Activated CD4-positive, alpha-beta T cell treated with anti-CD3 and anti-CD28 coated beads for 36 hours (primary cell): ENCODE measurements at regions of chr4 and their contacts with region 1.

Region 1: GRCh38 chr4:141158219-141158618 is 24.9 kb upstream of the RNF150 start:
- DNase-seq: no peak
- ATAC-seq: no peak
- H3K4me3 Mint-ChIP-seq: no peak overlapping the region
- H3K27ac Mint-ChIP-seq: no peak overlapping the region
- H3K4me1 Mint-ChIP-seq: no peaks in the 10 kb centered on the region
- H3K27me3 Mint-ChIP-seq: peaks cover 3% of the 10 kb centered on the region

Region 2: GRCh38 chr4:141853091-141853764 is 695.0 kb after region 1 on chr4:
- CTCF ChIA-PET with region 1: no interaction called
- POLR2A ChIA-PET with region 1: no interaction called
- intact Hi-C with region 1: loop called in 1 of 2 experiments (anchors 10 kb)
- DNase-seq: no peak
- ATAC-seq: no peak
- H3K4me3 Mint-ChIP-seq: no peak overlapping the region
- H3K27ac Mint-ChIP-seq: no peak overlapping the region
- H3K4me1 Mint-ChIP-seq: no peaks in the 10 kb centered on the region
- H3K27me3 Mint-ChIP-seq: peaks cover 1% of the 10 kb centered on the region

Region 3: GRCh38 chr4:141922236-141922635 is 764.0 kb after region 1 on chr4:
- CTCF ChIA-PET with region 1: no interaction called
- POLR2A ChIA-PET with region 1: no interaction called
- intact Hi-C with region 1: loop called in 1 of 2 experiments (anchors 10 kb)
- DNase-seq: no peak
- ATAC-seq: no peak
- H3K4me3 Mint-ChIP-seq: no peak overlapping the region
- H3K27ac Mint-ChIP-seq: no peak overlapping the region
- H3K4me1 Mint-ChIP-seq: no peaks in the 10 kb centered on the region
- H3K27me3 Mint-ChIP-seq: peaks cover 4% of the 10 kb centered on the region